CD14-positive monocyte (primary cell): ENCODE measurements at regions of chr11 and their contacts with region 1.

Region 1: DNA sequence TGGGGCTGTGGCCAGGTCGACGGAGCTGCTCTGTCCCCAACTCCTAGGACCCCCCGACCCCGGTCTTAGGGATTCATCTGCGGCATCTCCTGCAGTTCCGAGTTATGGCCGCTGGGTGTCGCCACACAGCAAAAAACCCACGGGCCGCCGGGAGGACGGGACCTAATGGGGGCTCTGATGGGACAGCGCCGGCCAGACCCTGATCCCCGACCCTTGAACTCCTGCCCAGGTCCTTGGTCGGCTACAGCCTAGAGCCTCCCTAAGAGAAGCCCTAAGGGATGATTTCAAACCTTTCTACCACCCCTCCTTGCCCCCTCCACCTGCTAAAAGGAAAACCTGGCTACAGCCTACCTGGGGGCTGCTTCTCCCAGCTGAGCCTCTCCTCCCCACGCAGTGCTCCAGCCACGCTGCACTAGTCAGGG is 30.8 kb upstream of the LRRC10B start:
- DNase-seq: peak; percentile 7 to 28 (median 9)
- H3K4me3 ChIP-seq: no peak overlapping the region
- H3K4me3 Mint-ChIP-seq: no peak overlapping the region
- H3K27ac ChIP-seq: no peak overlapping the region
- H3K27ac Mint-ChIP-seq: no peak overlapping the region
- H3K4me1 ChIP-seq: no peaks in the 10 kb centered on the region
- H3K4me1 Mint-ChIP-seq: no peaks in the 10 kb centered on the region
- H3K27me3 ChIP-seq: no peaks in the 10 kb centered on the region
- H3K27me3 Mint-ChIP-seq: peaks cover 0 to 3% (median 2%) of the 10 kb centered on the region in 3 donors
- CTCF ChIP-seq: peak; percentile 99

Region 2: GRCh38 chr11:61516675-61517572 is 39.2 kb after region 1 on chr11:
- intact Hi-C with region 1: loop called (anchors 5 kb)
- DNase-seq: peak; percentile 6 to 39 (median 14)
- H3K4me3 ChIP-seq: peak overlapping the region in 1 of 3 experiments; percentile 5
- H3K4me3 Mint-ChIP-seq: peak overlapping the region in 1 of 2 donors; percentile 68
- H3K27ac ChIP-seq: no peak overlapping the region
- H3K27ac Mint-ChIP-seq: no peak overlapping the region
- H3K4me1 ChIP-seq: peaks cover 6 to 10% of the 10 kb centered on the region in 2 donors
- H3K4me1 Mint-ChIP-seq: peaks cover 5% of the 10 kb centered on the region
- H3K27me3 ChIP-seq: peaks cover 0 to 3% of the 10 kb centered on the region in 2 donors
- H3K27me3 Mint-ChIP-seq: peaks cover 11 to 31% (median 16%) of the 10 kb centered on the region in 3 donors
- CTCF ChIP-seq: peak; percentile 97

Region 3: DNA sequence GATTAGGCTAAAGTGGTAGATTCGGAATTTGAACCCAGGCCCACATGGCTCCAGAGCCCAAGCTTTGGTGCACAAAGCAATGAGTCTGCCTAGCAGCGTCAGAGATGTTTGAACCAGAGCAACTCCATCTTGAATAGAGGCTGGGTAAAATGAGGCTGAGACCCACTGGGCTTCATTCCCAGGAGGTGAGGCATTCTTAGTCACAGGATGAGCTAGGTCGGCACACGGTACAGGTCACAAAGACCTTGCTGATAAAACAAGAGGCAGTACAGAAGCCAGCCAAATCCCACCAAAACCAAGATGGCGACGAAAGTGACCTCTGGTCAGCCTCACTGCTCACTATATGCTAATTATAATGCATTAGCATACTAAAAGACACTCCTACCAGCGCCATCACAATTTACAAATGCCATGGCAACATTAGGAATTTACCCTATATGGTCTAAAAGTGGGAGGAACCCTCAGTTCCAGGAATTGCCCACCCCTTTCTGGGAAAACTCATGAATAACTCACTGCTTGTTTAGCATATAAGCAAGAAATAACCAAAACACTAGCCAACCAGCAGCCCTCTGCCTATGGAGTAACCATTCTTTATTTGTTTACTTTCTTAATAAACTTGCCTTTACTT is 162.2 kb after region 1 on chr11:
- intact Hi-C with region 1: loop called (anchors 5 to 10 kb)
- DNase-seq: no peak
- H3K4me3 ChIP-seq: no peak overlapping the region
- H3K4me3 Mint-ChIP-seq: no peak overlapping the region
- H3K27ac ChIP-seq: no peak overlapping the region
- H3K27ac Mint-ChIP-seq: no peak overlapping the region
- H3K4me1 ChIP-seq: no peaks in the 10 kb centered on the region
- H3K4me1 Mint-ChIP-seq: peaks cover under 1% of the 10 kb centered on the region
- H3K27me3 ChIP-seq: no peaks in the 10 kb centered on the region
- H3K27me3 Mint-ChIP-seq: peaks cover 5 to 16% (median 10%) of the 10 kb centered on the region in 3 donors
- CTCF ChIP-seq: no peak